Astrocyte of the cerebellum (primary cell): ENCODE measurements at regions of chr5 and their contacts with region 1.

Region 1: DNA sequence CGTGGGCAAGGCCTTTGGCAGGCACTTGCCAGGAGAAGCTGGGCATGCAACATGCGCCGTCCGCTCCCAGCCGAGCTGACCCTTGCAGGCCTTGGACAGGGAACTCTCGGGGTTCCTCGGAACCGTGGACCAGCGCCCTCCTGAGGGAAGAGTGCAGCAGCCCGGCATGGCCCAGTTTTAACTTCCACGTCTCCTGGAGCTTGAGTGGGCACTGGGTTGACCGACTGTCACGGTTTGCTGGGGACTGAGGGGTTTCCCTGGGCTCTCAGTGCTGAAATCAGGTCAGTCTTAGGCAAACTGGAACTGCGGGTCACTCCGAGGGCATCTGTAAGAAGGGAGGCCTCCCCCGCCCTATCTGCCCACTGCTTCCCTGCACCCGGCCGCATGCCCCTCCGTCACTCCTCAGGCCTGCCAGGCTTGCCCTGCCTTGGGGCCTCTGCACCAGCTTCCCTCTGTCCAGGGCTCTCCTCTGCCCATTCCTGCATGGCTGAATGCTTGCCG is 87.0 kb upstream of the PHYKPL start:
- DNase-seq: no peak
- H3K4me3 ChIP-seq: no peak overlapping the region
- CTCF ChIP-seq: no peak

Region 2: GRCh38 chr5:178356431-178356872 is 36.9 kb after region 1 on chr5:
- in situ Hi-C with region 1: no loop called
- DNase-seq: peak; percentile 13
- H3K4me3 ChIP-seq: no peak overlapping the region
- CTCF ChIP-seq: no peak

Region 3: GRCh38 chr5:178388386-178389025 is 68.9 kb after region 1 on chr5:
- in situ Hi-C with region 1: loop called (anchors 5 kb)
- DNase-seq: no peak
- H3K4me3 ChIP-seq: no peak overlapping the region
- CTCF ChIP-seq: no peak